ENCODE measurements at regions of chr5 and their contacts with region 1.

Region 1: DNA sequence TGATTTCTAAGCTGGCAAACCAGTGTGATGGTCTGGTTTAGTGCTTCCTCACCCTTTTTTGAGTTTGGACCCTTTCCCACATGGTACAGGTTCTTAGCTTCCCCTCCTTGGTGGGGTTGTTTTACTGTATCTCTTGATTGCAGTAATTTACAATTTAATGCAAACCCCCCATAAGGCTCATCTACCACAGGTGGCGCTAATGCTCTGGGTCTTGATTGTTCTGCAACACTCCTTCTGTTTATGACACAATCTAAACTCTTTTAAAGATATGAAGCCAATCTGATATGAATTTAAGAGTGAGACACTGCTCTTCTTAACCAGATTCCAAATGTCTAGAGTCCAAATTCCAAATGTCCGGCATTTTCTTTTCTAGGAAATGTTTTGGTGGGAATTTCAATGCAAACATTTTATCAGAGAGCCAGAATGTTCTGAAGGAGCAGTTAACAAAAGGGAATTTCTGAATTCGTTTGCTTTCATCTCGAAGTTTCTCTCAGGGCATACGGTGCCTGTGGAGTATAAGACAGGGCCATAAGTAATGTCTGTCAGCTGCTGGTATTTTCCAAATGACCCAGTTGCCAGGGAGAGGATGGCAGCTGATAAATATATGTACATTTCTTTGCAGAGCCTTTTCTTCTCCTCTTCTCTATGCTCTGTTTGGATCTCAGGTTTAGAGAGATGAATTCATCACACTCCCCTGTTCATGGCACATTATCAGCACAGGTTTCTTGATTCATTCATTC is 246.8 kb downstream of the ARHGAP26 start:
- DNase-seq: no peak
- ATAC-seq: peak; percentile 28
- H3K4me3 ChIP-seq: no peak overlapping the region
- H3K27ac ChIP-seq: no peak overlapping the region
- H3K4me1 ChIP-seq: peaks cover 32% of the 10 kb centered on the region
- H3K27me3 ChIP-seq: no peaks in the 10 kb centered on the region
- CTCF ChIP-seq: peak; percentile 68 to 75 (median 72)
- EP300 ChIP-seq: peak in 1 of 2 experiments; percentile 8; a peak in 1 of 4 replicates
- POLR2A ChIP-seq: no peak
- RAD21 ChIP-seq: peak; percentile 88

Region 2: GRCh38 chr5:142881076-142881783 is 135.7 kb before region 1 on chr5:
- CTCF ChIA-PET with region 1: no interaction called
- POLR2A ChIA-PET with region 1: no interaction called
- RAD21 ChIA-PET with region 1: no interaction called
- SMC1A ChIA-PET with region 1: no interaction called
- in situ Hi-C with region 1: no loop called
- intact Hi-C with region 1: no loop called
- DNase-seq: no peak
- ATAC-seq: peak; percentile 55
- H3K4me3 ChIP-seq: no peak overlapping the region
- H3K27ac ChIP-seq: no peak overlapping the region
- H3K4me1 ChIP-seq: no peaks in the 10 kb centered on the region
- H3K27me3 ChIP-seq: no peaks in the 10 kb centered on the region
- CTCF ChIP-seq: no peak
- EP300 ChIP-seq: no peak
- POLR2A ChIP-seq: no peak
- RAD21 ChIP-seq: no peak

Region 3: GRCh38 chr5:143040622-143041021 is 23.7 kb after region 1 on chr5:
- CTCF ChIA-PET with region 1: interaction called, 7 read pairs
- POLR2A ChIA-PET with region 1: interaction called, 6 read pairs
- RAD21 ChIA-PET with region 1: interaction called, 30 read pairs
- SMC1A ChIA-PET with region 1: interaction called, 17 read pairs
- in situ Hi-C with region 1: no loop called
- intact Hi-C with region 1: loop called (anchors 2 kb)
- DNase-seq: no peak
- ATAC-seq: peak; percentile 18; the same call in 2 of the 3 replicates
- H3K4me3 ChIP-seq: no peak overlapping the region
- H3K27ac ChIP-seq: no peak overlapping the region
- H3K4me1 ChIP-seq: peaks cover 31% of the 10 kb centered on the region
- H3K27me3 ChIP-seq: no peaks in the 10 kb centered on the region
- CTCF ChIP-seq: no peak
- EP300 ChIP-seq: no peak
- POLR2A ChIP-seq: no peak
- RAD21 ChIP-seq: no peak

Region 4: DNA sequence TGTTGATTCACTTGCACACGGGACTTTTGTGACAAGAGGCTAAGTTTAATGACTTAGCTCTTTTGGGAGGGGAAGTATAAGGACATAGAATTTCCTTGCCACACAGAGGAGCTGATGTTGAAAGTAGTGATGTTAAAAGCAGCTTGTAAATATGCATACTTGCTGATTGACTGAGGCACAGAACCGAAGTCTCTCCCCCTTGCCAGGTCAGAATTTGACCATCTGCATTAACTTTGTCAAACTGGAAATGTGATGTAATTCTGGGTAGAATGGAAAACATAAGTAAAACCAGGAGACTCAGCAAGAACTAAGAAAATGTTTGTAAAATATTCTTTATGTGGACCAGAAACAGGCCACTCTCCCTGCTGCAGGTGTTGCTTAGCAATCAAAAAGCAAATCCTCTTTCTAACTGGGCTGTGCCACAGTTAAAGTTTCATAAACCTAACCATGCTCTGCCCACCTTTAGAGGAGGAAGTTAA is 102.4 kb after region 1 on chr5:
- CTCF ChIA-PET with region 1: interaction called, 5 read pairs
- POLR2A ChIA-PET with region 1: interaction called, 3 read pairs
- RAD21 ChIA-PET with region 1: interaction called, 17 read pairs
- SMC1A ChIA-PET with region 1: interaction called, 17 read pairs
- in situ Hi-C with region 1: no loop called
- intact Hi-C with region 1: no loop called
- DNase-seq: no peak
- ATAC-seq: peak; percentile 82
- H3K4me3 ChIP-seq: no peak overlapping the region
- H3K27ac ChIP-seq: peak overlapping the region; percentile 35
- H3K4me1 ChIP-seq: peaks cover 23% of the 10 kb centered on the region
- H3K27me3 ChIP-seq: no peaks in the 10 kb centered on the region
- CTCF ChIP-seq: no peak
- EP300 ChIP-seq: no peak
- POLR2A ChIP-seq: no peak
- RAD21 ChIP-seq: no peak

Region 5: DNA sequence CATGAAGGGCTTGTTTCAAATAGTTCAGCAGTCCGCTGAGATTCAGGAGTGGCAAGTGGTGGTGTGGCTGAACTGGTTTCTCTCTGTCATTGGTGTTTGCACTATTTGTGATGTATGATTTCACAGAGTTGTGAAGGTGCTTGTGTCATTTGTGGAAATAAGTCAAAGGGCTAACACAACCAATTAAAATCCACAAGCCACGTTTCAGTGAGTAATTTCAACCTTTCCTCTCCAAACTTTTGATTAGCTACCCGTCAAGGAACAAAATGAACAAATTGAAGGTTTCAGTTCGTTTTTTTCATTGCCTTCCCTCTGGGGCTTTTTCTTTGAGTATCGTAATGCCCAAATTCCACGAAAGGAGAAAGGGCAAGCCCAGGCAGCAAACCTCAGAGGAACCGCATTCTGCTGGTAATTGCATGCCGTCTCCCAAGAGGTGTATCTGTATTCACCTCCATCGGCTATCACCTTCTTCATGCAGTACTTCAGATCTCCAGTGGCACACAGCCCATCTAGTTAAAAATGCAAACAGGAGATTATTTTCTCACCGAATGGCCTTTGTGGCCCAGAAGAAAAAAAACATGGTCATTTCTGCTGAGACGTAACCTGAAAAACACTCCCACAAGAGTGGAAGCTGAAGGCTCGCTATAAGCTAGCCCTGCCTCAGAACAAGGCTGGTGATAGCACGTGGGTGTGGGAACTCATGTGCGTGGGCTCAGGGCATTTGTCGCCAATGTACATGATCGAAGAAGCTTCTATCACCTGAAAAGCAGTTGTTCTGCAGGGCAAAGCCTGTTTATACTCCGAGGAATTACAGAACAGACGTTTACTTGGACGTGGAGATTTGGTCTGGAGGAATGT is 189.5 kb after region 1 on chr5:
- CTCF ChIA-PET with region 1: interaction called, 31 read pairs
- POLR2A ChIA-PET with region 1: interaction called, 11 read pairs
- RAD21 ChIA-PET with region 1: interaction called, 40 read pairs
- SMC1A ChIA-PET with region 1: interaction called, 138 read pairs
- in situ Hi-C with region 1: loop called (anchors 5 kb)
- intact Hi-C with region 1: loop called (anchors 2 kb)
- DNase-seq: peak; percentile 98
- ATAC-seq: peak; percentile 71
- H3K4me3 ChIP-seq: peak overlapping the region; percentile 21; the same call in 1 of the 2 replicates
- H3K27ac ChIP-seq: peak overlapping the region; percentile 94
- H3K4me1 ChIP-seq: peaks cover 52% of the 10 kb centered on the region
- H3K27me3 ChIP-seq: no peaks in the 10 kb centered on the region
- CTCF ChIP-seq: peak in 1 of 3 experiments; percentile 13; a peak in 1 of 6 replicates
- EP300 ChIP-seq: peak; percentile 76 to 91; a peak in 2 of 4 replicates
- POLR2A ChIP-seq: peak; percentile 61; the same call in 1 of the 2 replicates
- RAD21 ChIP-seq: peak; percentile 40

Region 6: DNA sequence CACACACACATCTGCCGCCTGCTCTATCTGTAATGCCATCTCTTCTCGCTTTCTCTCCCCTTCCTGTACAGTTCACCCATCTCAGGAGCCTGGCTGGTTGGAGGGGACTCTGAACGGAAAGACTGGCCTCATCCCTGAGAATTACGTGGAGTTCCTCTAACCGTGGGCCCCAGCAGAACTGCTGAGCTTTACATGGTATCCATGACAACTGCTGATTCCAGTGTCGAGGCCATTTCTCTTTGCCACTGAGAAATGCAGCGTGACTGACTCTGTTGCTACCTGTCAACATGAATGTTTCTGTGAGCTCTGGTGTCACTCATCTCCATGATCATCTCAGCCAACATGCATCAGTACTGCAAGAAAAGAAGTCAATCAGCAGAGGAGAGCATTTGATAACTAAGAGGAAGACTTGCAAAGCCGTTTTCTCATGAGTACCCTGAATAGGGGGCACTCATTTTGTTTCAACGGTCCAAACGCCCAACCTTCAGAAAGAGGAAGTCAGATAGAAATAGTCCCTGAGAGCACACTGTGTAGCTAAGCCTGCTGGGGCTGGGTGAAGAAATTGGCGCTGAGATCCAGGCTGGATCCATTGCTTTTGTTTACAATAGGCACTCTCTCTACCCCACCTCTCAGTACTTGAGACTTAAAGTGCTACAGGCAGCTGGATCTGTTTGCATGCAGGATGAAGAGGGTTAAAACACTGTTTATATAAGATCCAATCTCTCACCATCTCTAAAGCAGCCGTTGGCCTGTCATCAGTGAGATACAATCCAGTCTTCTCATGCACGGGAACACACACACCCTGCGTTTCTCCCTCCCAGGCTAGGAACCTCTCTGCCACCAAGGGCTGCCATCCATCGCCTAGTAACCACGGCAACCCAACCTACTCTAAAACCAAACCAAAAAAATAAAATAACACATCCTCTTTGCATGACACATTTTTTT is 205.6 kb after region 1 on chr5:
- CTCF ChIA-PET with region 1: interaction called, 20 read pairs
- POLR2A ChIA-PET with region 1: interaction called, 12 read pairs
- RAD21 ChIA-PET with region 1: interaction called, 53 read pairs
- SMC1A ChIA-PET with region 1: interaction called, 34 read pairs
- in situ Hi-C with region 1: no loop called
- intact Hi-C with region 1: no loop called
- DNase-seq: peak; percentile 82
- ATAC-seq: peak; percentile 70
- H3K4me3 ChIP-seq: no peak overlapping the region
- H3K27ac ChIP-seq: peak overlapping the region; percentile 100
- H3K4me1 ChIP-seq: peaks cover 60% of the 10 kb centered on the region
- H3K27me3 ChIP-seq: no peaks in the 10 kb centered on the region
- CTCF ChIP-seq: no peak
- EP300 ChIP-seq: 0 out of 4 replicates have a peak, but pooled peaks of 1 of the 2 experiments have one; percentile 50
- POLR2A ChIP-seq: peak; percentile 50; the same call in 1 of the 2 replicates
- RAD21 ChIP-seq: no peak; the same call in 1 of the 2 replicates

Measured in GM12878 (cell line).